ENCODE measurements at regions of chr11 and their contacts with region 1.

Region 1: DNA sequence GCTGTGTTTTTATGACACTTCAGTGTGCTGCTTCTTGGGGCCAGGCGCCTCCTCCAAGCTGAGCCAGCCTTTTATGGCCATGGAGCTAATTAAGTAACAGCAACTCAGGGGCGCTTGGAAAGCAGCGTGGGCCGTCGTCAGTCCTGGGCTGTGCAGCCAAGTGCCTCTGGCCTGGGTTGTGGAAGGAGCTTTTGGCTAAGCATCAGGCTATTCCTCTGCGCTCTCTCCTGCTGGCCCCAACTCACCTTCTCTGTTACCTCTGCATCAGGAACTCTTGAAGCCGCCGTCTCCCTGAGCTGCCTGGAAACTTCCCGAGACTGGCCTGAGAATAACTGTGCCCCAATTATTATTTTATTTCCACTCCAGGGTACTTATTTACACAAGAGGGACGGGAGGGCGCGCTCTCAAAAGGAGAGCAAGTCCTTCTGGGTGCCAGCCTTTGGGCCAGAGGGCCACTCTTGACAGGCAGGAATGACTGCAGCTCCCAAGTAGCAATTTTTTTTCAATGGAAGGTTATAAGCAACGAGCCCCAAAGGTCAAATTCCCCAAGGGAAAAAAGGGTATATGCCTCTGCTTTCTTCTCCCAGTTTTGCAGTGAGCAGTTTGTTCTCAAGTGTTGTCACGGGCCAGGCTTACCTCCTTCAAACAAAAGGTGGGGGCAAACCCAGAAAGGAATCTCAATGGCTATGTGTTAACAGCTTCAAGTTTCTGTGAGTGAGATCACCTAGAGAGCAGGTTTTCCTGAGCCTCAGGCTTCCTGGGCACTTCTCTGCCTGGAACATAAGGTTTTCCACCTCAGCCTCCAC is 38.5 kb upstream of the NAV2 start:
- DNase-seq: peak; percentile 89 to 93
- ATAC-seq: peak; percentile 86
- H3K4me3 ChIP-seq: no peak overlapping the region
- H3K27ac ChIP-seq: peak overlapping the region; percentile 95 to 98
- H3K4me1 ChIP-seq: peaks cover 0 to 9% of the 10 kb centered on the region in 2 donors
- H3K27me3 ChIP-seq: no peaks in the 10 kb centered on the region

Region 2: GRCh38 chr11:18485913-18486528 is 1188.1 kb before region 1 on chr11:
- intact Hi-C with region 1: no loop called
- DNase-seq: no peak
- ATAC-seq: no peak
- H3K4me3 ChIP-seq: no peak overlapping the region
- H3K27ac ChIP-seq: no peak overlapping the region
- H3K4me1 ChIP-seq: no peaks in the 10 kb centered on the region
- H3K27me3 ChIP-seq: no peaks in the 10 kb centered on the region

Region 3: DNA sequence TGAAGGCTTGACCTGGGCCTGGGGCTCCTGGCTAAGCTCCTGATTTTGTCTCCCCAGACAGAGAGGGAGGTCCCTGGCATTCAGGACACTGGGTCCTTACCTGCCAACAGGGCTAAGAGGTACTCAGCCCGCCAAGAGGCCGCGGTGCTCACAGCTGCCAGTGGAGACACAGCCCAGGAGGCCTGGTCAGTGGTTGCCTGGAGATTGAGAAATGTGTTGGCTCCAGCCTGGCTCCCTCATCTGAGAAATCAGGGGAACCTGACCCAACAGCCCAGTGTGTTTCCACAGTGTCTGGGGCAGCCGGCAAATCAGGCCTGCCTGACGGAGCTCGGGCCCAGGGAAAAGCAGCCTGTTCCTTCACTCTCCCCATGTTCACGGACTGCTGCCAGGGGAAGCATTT is 40.9 kb before region 1 on chr11:
- intact Hi-C with region 1: loop called in 1 of 2 experiments (anchors 5 kb)
- DNase-seq: peak; percentile 82
- ATAC-seq: peak; percentile 89
- H3K4me3 ChIP-seq: no peak overlapping the region
- H3K27ac ChIP-seq: peak overlapping the region; percentile 23 to 69
- H3K4me1 ChIP-seq: peaks cover 4 to 7% of the 10 kb centered on the region in 2 donors
- H3K27me3 ChIP-seq: no peaks in the 10 kb centered on the region

Region 4: DNA sequence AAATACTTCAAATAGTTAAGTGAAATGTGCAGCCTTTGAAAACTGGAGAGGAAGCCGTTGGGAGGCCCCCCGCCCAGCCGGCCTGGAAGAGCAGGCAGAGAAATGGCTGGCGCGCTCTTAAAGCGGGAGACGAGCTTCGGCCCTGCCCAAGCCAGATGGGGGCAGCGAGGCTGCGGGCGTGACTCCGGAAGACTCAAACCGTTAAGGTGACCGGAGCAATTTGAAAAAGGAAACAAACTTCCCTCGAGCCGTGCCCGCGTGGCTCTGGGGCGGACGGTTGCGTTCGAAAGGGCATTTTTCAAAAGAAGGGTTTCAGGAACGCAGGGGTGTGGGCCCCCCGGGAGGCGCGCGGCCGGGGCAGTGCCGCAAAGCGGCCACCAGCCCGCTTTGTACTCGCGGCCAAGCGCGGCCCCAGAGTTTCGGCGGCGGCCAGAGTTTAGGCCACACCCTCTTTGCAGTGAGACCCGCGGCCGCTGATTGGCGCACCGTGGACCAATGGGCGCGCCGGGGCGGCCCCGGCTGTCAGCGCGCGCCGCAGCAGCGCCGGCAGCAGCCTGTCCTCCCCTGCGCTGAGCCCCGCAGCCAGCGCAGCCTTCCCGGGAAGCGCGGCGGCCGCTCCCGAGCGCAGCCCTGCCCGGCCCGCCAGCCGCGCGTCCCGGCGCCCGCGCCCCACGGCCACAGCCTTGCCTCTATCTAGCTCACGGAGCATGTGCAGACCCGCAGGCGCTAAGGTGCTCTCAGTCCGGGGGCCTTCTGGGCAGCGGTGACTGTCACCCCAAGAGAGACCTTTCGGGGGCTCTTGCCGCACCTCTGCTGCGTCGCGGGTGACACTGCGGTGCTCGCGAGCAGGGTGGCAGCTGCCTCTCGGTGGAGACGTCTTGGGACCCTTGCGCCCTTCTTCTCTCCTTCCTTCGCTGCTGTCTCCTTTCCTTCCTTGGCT is 38.4 kb after region 1 on chr11 and contains the start of gene NAV2:
- intact Hi-C with region 1: loop called in 1 of 2 experiments (anchors 5 kb)
- DNase-seq: peak; percentile 96
- ATAC-seq: peak; percentile 95
- H3K4me3 ChIP-seq: peak within 1 kb of the TSS; percentile 73 to 82
- H3K27ac ChIP-seq: peak within 1 kb of the TSS; percentile 73 to 96
- H3K4me1 ChIP-seq: peaks cover 0 to 4% of the 10 kb centered on the region in 2 donors
- H3K27me3 ChIP-seq: no peaks in the 10 kb centered on the region
- total RNA-seq, gene NAV2: 84.6 to 250 TPM

Region 5: GRCh38 chr11:19723572-19724342 is 49.6 kb after region 1 on chr11:
- intact Hi-C with region 1: no loop called
- DNase-seq: peak; percentile 79 to 81
- ATAC-seq: peak; percentile 46
- H3K4me3 ChIP-seq: no peak overlapping the region
- H3K27ac ChIP-seq: peak overlapping the region; percentile 96 to 100
- H3K4me1 ChIP-seq: peaks cover 22 to 24% of the 10 kb centered on the region in 2 donors
- H3K27me3 ChIP-seq: no peaks in the 10 kb centered on the region

Region 6: DNA sequence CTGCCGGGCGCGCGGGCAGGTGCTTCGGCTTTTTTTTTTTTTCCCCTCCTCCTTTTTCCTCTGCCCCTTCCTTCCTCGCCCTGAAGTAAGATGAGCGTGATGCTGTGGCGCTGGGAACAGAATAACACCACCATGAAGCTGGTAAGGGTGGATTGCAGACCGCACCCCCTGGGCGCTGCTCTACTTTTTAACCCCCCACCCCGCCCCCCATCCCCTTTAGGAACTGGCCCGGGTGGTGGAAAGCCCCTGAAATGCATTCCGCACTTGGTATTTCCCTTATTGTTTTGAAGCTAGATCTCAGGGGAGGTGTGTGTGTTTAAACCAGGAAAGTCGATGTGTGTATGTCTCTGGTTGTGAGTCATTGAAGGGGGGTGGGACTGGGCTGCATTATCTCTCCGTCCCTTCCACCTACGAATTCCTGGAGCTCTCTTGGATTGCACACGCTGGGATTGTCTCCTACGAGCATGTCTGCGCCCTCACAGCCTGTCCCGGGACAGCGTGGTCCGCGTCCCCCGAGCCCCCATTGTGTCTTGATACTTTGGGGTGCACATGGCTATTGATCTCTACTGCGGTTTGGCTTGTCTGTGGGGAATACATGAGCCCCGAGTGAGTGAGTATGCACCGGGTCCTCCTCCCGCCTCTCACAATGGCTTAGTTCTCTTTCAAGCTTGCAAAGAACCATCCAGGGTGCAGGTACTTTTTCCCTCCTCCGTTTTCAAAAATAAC is 103.4 kb after region 1 on chr11:
- intact Hi-C with region 1: no loop called
- DNase-seq: no peak
- ATAC-seq: no peak
- H3K4me3 ChIP-seq: peak overlapping the region; percentile 19 to 66
- H3K27ac ChIP-seq: peak overlapping the region; percentile 4 to 37
- H3K4me1 ChIP-seq: peaks cover 6 to 17% of the 10 kb centered on the region in 2 donors
- H3K27me3 ChIP-seq: no peaks in the 10 kb centered on the region

Region 7: GRCh38 chr11:19808076-19808911 is 134.2 kb after region 1 on chr11:
- intact Hi-C with region 1: no loop called
- DNase-seq: no peak
- ATAC-seq: no peak
- H3K4me3 ChIP-seq: no peak overlapping the region
- H3K27ac ChIP-seq: no peak overlapping the region
- H3K4me1 ChIP-seq: peaks cover 8 to 45% of the 10 kb centered on the region in 2 donors
- H3K27me3 ChIP-seq: no peaks in the 10 kb centered on the region

Measured in aorta (tissue), 5 donors.